Aorta (tissue), 5 donors: ENCODE measurements at regions of chr13 and their contacts with region 1.

Region 1: GRCh38 chr13:48595431-48596429 is 58.0 kb upstream of the CYSLTR2 start:
- DNase-seq: peak in 1 of 2 donors; percentile 67
- ATAC-seq: peak; percentile 87
- H3K4me3 ChIP-seq: no peak overlapping the region
- H3K27ac ChIP-seq: no peak overlapping the region
- H3K4me1 ChIP-seq: peaks cover 0 to under 1% of the 10 kb centered on the region in 2 donors
- H3K27me3 ChIP-seq: no peaks in the 10 kb centered on the region

Region 2: DNA sequence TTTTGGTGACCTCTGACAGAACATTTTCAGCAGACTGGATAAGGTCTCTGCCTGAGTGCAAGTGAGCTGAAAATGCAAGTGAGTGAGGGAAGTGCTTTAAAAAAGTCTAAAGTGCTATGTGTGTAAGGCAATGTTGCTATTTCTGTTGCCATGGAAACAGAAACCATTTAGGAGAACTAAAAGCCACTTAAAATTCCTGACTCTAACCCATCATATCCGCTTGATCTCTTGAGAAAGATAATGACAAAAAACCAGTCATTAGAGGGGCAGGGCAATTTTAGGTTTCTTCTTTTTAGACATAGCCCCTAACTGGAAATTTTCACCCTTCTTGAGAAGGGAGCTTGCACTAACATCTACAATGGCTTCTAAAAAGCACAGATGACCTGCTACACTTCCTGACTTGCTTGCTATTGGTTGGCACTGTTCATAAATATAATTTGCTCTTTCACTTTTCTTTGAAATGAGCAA is 57.8 kb after region 1 on chr13 and contains the start of gene CYSLTR2:
- intact Hi-C with region 1: no loop called
- DNase-seq: no peak
- ATAC-seq: peak; percentile 58
- H3K4me3 ChIP-seq: no peak within 1 kb of the TSS
- H3K27ac ChIP-seq: no peak within 1 kb of the TSS
- H3K4me1 ChIP-seq: no peaks in the 10 kb centered on the region
- H3K27me3 ChIP-seq: no peaks in the 10 kb centered on the region
- total RNA-seq, gene CYSLTR2: 1.1 TPM

Region 3: GRCh38 chr13:48749699-48750473 is 154.2 kb after region 1 on chr13:
- intact Hi-C with region 1: loop called in 1 of 2 experiments (anchors 10 kb)
- DNase-seq: peak; percentile 87 to 89
- ATAC-seq: peak; percentile 92
- H3K4me3 ChIP-seq: no peak overlapping the region
- H3K27ac ChIP-seq: no peak overlapping the region
- H3K4me1 ChIP-seq: peaks cover 0 to 2% of the 10 kb centered on the region in 2 donors
- H3K27me3 ChIP-seq: no peaks in the 10 kb centered on the region

Region 4: GRCh38 chr13:48769107-48769704 is 173.5 kb after region 1 on chr13:
- intact Hi-C with region 1: loop called (anchors 2 to 5 kb)
- DNase-seq: peak in 1 of 2 donors; percentile 76
- ATAC-seq: peak; percentile 97
- H3K4me3 ChIP-seq: no peak overlapping the region
- H3K27ac ChIP-seq: no peak overlapping the region
- H3K4me1 ChIP-seq: no peaks in the 10 kb centered on the region
- H3K27me3 ChIP-seq: no peaks in the 10 kb centered on the region